CD8-positive, alpha-beta T cell (primary cell): ENCODE measurements at regions of chr11 and their contacts with region 1.

Region 1: DNA sequence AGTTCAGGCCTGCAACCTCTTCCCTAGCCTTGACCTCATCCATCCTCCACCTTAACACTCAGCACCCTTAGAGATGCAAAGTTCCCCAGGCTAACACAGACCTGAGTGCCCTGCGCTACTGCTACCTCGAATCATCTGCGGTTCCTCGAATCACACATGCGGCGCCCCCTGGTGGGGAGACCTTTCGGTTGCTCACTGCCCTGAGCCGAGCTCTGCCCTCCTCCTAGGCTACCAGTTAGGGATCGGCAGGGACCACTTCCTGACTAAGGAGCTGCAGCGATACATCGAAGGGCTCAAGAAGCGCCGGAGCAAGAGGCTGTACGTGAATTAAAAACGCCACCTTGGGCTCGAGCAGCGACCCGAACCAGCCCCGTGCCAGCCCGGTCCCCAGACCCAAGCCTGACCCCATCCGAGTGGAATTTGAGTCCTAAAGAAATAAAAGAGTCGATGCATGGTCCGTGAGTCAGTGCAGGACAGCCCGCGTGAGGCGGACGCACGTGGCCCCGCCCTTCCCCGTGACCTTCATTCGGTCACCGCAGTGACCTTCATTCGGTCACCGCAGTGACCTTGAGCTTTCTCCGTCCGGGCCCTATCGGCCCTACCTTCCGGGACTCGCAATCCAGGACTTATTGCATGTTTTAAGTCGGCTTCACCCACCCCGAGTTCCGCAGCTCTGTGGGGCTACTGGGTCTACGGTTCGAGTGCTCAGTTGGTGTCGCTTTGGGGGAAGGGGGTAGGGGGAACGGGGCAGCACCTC is 830 bp upstream of the ESRRA start:
- DNase-seq: peak; percentile 89 to 98 (median 94)
- ATAC-seq: peak; percentile 18
- H3K4me3 ChIP-seq: peak overlapping the region; percentile 80 to 99
- H3K4me3 Mint-ChIP-seq: peak overlapping the region; percentile 92
- H3K27ac ChIP-seq: peak overlapping the region; percentile 96 to 98
- H3K27ac Mint-ChIP-seq: peak overlapping the region; percentile 97
- H3K4me1 ChIP-seq: peaks cover 50% of the 10 kb centered on the region
- H3K4me1 Mint-ChIP-seq: peaks cover 41% of the 10 kb centered on the region
- H3K27me3 ChIP-seq: peaks cover 13 to 21% of the 10 kb centered on the region in 2 experiments
- H3K27me3 Mint-ChIP-seq: peaks cover 19% of the 10 kb centered on the region
- CTCF ChIP-seq: peak; percentile 90

Region 2: DNA sequence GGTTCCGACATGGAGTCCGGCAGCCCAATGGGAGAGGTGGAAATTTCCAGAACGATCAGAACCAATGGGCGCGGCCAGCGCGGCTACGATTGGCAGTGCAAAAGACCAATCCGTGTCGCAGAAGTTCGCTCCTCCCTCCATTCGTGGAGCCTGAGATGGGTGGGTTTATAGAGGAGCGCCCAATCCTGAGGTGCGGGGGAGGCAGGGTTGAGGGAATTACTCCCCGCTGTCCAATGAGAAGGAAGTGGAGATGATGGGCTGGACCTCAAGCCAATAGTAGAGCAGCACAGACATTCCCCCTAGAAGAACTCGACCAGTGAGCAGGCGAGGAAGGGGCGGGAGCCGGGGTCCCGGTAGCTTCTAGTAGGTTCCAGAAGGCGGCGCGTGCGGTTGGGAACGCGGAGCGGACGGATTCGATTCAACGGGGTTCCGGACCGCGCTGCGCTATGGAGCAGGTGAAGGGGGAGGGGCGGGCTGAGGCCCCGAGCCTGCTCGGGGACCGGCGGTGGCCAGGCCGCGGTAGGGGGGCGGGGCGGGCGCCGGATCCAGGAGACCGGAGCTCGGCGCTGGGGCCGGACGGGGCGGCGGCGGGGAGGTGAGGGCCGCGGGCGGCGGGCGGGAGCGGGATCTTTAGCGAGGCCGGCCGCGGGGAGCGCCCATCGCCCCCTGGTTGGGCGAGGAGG is 118.5 kb before region 1 on chr11 and contains the start of gene STIP1:
- CTCF ChIA-PET with region 1: interaction called, 12 read pairs
- POLR2A ChIA-PET with region 1: interaction called, 3 read pairs
- intact Hi-C with region 1: loop called (anchors 1 kb)
- DNase-seq: peak; percentile 96 to 100 (median 98)
- ATAC-seq: peak; percentile 87
- H3K4me3 ChIP-seq: peak within 1 kb of the TSS; percentile 79 to 88
- H3K4me3 Mint-ChIP-seq: peak within 1 kb of the TSS; percentile 96
- H3K27ac ChIP-seq: peak within 1 kb of the TSS; percentile 57 to 85
- H3K27ac Mint-ChIP-seq: peak within 1 kb of the TSS; percentile 97
- H3K4me1 ChIP-seq: peaks cover 39% of the 10 kb centered on the region
- H3K4me1 Mint-ChIP-seq: peaks cover 43% of the 10 kb centered on the region
- H3K27me3 ChIP-seq: no peaks in the 10 kb centered on the region
- H3K27me3 Mint-ChIP-seq: no peaks in the 10 kb centered on the region
- CTCF ChIP-seq: peak; percentile 36
- total RNA-seq, gene STIP1: 37.0 to 37.7 TPM

Region 3: DNA sequence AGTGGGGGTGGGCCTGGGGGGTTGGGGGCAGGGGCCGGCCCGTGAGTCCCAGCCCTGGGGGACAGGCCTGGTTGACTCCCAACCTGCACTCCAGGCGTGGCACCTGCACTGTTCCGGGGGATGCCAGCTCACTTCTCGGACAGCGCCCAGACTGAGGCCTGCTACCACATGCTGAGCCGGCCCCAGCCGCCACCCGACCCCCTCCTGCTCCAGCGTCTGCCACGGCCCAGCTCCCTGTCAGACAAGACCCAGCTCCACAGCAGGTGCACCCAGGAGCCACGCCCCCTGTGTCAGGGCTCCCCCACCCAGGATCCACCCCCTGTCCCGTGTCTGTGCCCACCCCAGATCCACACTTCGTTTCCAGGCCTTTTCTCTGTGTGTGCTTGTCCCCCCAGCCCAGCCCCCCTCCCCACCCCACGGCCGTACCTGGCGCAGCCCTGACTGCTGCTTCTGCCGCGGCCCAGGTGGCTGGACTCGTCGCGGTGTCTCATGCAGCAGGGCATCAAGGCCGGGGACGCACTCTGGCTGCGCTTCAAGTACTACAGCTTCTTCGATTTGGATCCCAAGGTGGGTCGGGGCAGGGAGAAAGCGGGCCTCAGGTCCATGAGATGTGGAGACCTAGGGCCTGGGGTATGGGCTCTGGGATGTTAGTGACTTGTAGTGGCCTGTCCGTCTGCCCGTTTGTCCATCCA is 93.2 kb before region 1 on chr11:
- CTCF ChIA-PET with region 1: interaction called, 276 read pairs
- POLR2A ChIA-PET with region 1: interaction called, 43 read pairs
- intact Hi-C with region 1: no loop called
- DNase-seq: no peak
- ATAC-seq: no peak
- H3K4me3 ChIP-seq: no peak overlapping the region
- H3K4me3 Mint-ChIP-seq: no peak overlapping the region
- H3K27ac ChIP-seq: no peak overlapping the region
- H3K27ac Mint-ChIP-seq: no peak overlapping the region
- H3K4me1 ChIP-seq: peaks cover 10% of the 10 kb centered on the region
- H3K4me1 Mint-ChIP-seq: peaks cover 30% of the 10 kb centered on the region
- H3K27me3 ChIP-seq: no peaks in the 10 kb centered on the region
- H3K27me3 Mint-ChIP-seq: no peaks in the 10 kb centered on the region
- CTCF ChIP-seq: no peak

Region 4: GRCh38 chr11:64246871-64247728 is 57.4 kb before region 1 on chr11 and contains the start of gene PPP1R14B:
- CTCF ChIA-PET with region 1: interaction called, 152 read pairs
- POLR2A ChIA-PET with region 1: interaction called, 13 read pairs
- intact Hi-C with region 1: loop called (anchors 1 kb)
- DNase-seq: peak; percentile 48 to 83 (median 81)
- ATAC-seq: peak; percentile 58
- H3K4me3 ChIP-seq: peak within 1 kb of the TSS; percentile 75 to 98
- H3K4me3 Mint-ChIP-seq: peak within 1 kb of the TSS; percentile 85
- H3K27ac ChIP-seq: peak within 1 kb of the TSS; percentile 35 to 42
- H3K27ac Mint-ChIP-seq: peak within 1 kb of the TSS; percentile 82
- H3K4me1 ChIP-seq: peaks cover 41% of the 10 kb centered on the region
- H3K4me1 Mint-ChIP-seq: peaks cover 44% of the 10 kb centered on the region
- H3K27me3 ChIP-seq: no peaks in the 10 kb centered on the region
- H3K27me3 Mint-ChIP-seq: no peaks in the 10 kb centered on the region
- CTCF ChIP-seq: no peak
- total RNA-seq, gene PPP1R14B: 25.7 to 30.8 TPM

Region 5: GRCh38 chr11:64284048-64284961 is 20.2 kb before region 1 on chr11 and contains the start of gene BAD:
- CTCF ChIA-PET with region 1: interaction called, 55 read pairs
- POLR2A ChIA-PET with region 1: interaction called, 13 read pairs
- intact Hi-C with region 1: loop called (anchors 1 kb)
- DNase-seq: peak; percentile 85 to 95 (median 92)
- ATAC-seq: peak; percentile 77
- H3K4me3 ChIP-seq: peak within 1 kb of the TSS; percentile 73 to 77
- H3K4me3 Mint-ChIP-seq: peak within 1 kb of the TSS; percentile 88
- H3K27ac ChIP-seq: peak within 1 kb of the TSS; percentile 95 to 100
- H3K27ac Mint-ChIP-seq: peak within 1 kb of the TSS; percentile 97
- H3K4me1 ChIP-seq: peaks cover 18% of the 10 kb centered on the region
- H3K4me1 Mint-ChIP-seq: peaks cover 16% of the 10 kb centered on the region
- H3K27me3 ChIP-seq: no peaks in the 10 kb centered on the region
- H3K27me3 Mint-ChIP-seq: no peaks in the 10 kb centered on the region
- CTCF ChIP-seq: no peak
- total RNA-seq, gene BAD: 14.6 to 18.2 TPM

Region 6: GRCh38 chr11:64331557-64332371 is 27.3 kb after region 1 on chr11:
- CTCF ChIA-PET with region 1: interaction called, 11 read pairs
- POLR2A ChIA-PET with region 1: no interaction called
- intact Hi-C with region 1: loop called (anchors 1 kb)
- DNase-seq: peak; percentile 53 to 87 (median 74)
- ATAC-seq: peak; percentile 89
- H3K4me3 ChIP-seq: no peak overlapping the region
- H3K4me3 Mint-ChIP-seq: peak overlapping the region; percentile 27
- H3K27ac ChIP-seq: peak overlapping the region in 1 of 2 experiments; percentile 61
- H3K27ac Mint-ChIP-seq: peak overlapping the region; percentile 52
- H3K4me1 ChIP-seq: peaks cover 6% of the 10 kb centered on the region
- H3K4me1 Mint-ChIP-seq: peaks cover 12% of the 10 kb centered on the region
- H3K27me3 ChIP-seq: no peaks in the 10 kb centered on the region
- H3K27me3 Mint-ChIP-seq: no peaks in the 10 kb centered on the region
- CTCF ChIP-seq: peak; percentile 51